ENCODE measurements at regions of chr1 and their contacts with region 1.

Region 1: DNA sequence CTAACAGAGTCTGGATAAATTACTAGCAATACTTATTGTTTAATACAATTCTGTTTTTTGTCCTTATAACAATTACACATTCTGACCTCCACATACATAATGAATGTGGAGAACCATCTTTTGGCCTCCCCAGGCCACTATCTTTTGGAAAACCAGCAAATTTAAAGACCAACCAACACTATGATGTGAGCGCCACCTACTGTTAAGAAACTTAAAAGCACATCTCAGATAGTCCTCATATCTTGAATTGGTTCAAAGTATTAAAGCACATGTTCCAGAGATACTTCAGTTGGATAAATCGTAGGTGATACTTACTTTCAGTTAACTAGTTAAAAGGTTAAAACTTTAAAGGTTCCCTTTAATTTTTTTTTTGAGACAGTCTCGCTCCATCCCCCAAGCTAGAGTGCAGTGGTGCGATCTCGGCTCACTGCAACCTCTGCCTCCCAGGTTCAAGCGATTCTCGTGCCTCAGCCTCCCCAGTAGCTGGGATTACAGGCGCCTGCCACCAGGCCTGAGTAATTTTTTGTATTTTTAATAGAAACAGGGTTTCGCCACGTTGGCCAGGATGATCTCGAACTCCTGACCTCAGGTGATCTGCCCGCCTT is 29.3 kb upstream of the USP1 start:
- DNase-seq: no peak
- H3K4me3 ChIP-seq: no peak overlapping the region
- H3K27ac ChIP-seq: no peak overlapping the region
- H3K4me1 ChIP-seq: no peaks in the 10 kb centered on the region
- H3K27me3 ChIP-seq: no peaks in the 10 kb centered on the region
- CTCF ChIP-seq: peak; percentile 44 to 70 (median 62)
- POLR2A ChIP-seq: no peak

Region 2: GRCh38 chr1:62175568-62176179 is 231.8 kb before region 1 on chr1:
- intact Hi-C with region 1: loop called (anchors 10 kb)
- DNase-seq: no peak
- H3K4me3 ChIP-seq: no peak overlapping the region
- H3K27ac ChIP-seq: no peak overlapping the region
- H3K4me1 ChIP-seq: no peaks in the 10 kb centered on the region
- H3K27me3 ChIP-seq: no peaks in the 10 kb centered on the region
- CTCF ChIP-seq: peak; percentile 49 to 74 (median 58)
- POLR2A ChIP-seq: no peak

Region 3: DNA sequence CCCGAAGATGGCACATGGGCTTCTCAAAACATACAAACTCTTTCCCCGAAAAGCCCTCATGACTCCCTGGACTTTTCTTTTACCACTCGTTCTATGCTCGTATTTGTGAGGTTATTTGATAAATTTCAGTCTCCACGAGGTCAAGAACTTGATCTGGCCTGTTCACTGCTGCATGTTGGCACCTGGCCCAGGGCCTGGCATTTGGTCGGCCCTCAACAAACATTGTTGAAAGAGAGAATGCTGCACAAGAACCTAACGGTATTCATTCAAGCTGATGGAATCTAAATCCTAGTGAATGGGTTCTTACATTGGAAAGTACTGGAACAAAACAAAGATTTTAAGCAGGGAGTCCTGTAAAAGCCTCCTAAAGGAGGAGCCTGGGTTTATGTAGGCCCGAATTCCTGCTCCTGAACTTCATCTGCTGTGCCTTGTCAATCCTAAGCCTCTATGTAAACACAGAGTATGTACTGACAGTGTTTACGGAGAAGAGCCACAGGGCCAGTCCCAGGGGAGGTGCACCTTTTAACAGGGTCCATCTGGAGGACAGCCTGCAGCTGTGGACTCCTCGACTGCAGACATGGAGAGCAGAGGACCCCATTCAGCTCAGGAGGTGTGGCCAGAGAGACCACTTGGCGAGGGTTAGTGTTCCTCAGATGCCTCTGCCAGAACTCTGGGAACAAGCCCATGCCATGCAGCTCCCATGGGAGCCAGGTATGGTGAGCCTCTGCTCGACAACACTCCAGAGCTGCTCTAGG is 166.0 kb before region 1 on chr1:
- intact Hi-C with region 1: no loop called
- DNase-seq: no peak
- H3K4me3 ChIP-seq: no peak overlapping the region
- H3K27ac ChIP-seq: no peak overlapping the region
- H3K4me1 ChIP-seq: no peaks in the 10 kb centered on the region
- H3K27me3 ChIP-seq: no peaks in the 10 kb centered on the region
- CTCF ChIP-seq: no peak
- POLR2A ChIP-seq: no peak

Region 4: GRCh38 chr1:62573675-62574074 is 166.2 kb after region 1 on chr1:
- intact Hi-C with region 1: no loop called
- DNase-seq: no peak
- H3K4me3 ChIP-seq: no peak overlapping the region
- H3K27ac ChIP-seq: no peak overlapping the region
- H3K4me1 ChIP-seq: no peaks in the 10 kb centered on the region
- H3K27me3 ChIP-seq: no peaks in the 10 kb centered on the region
- CTCF ChIP-seq: no peak
- POLR2A ChIP-seq: no peak

Measured in uterus (tissue), 4 donors.